Activated CD4-positive, alpha-beta T cell treated with anti-CD3 and anti-CD28 coated beads for 36 hours (primary cell): ENCODE measurements at regions of chr1 and their contacts with region 1.

Region 1: GRCh38 chr1:41003640-41004220 is 17.8 kb downstream of the SLFNL1 start:
- DNase-seq: peak; percentile 96
- ATAC-seq: peak; percentile 100
- H3K4me3 Mint-ChIP-seq: no peak overlapping the region
- H3K27ac Mint-ChIP-seq: no peak overlapping the region
- H3K4me1 Mint-ChIP-seq: peaks cover 26% of the 10 kb centered on the region
- H3K27me3 Mint-ChIP-seq: no peaks in the 10 kb centered on the region

Region 2: GRCh38 chr1:39754906-39755504 is 1248.7 kb before region 1 on chr1:
- CTCF ChIA-PET with region 1: no interaction called
- POLR2A ChIA-PET with region 1: no interaction called
- intact Hi-C with region 1: no loop called
- DNase-seq: no peak
- ATAC-seq: no peak
- H3K4me3 Mint-ChIP-seq: no peak overlapping the region
- H3K27ac Mint-ChIP-seq: no peak overlapping the region
- H3K4me1 Mint-ChIP-seq: no peaks in the 10 kb centered on the region
- H3K27me3 Mint-ChIP-seq: no peaks in the 10 kb centered on the region

Region 3: DNA sequence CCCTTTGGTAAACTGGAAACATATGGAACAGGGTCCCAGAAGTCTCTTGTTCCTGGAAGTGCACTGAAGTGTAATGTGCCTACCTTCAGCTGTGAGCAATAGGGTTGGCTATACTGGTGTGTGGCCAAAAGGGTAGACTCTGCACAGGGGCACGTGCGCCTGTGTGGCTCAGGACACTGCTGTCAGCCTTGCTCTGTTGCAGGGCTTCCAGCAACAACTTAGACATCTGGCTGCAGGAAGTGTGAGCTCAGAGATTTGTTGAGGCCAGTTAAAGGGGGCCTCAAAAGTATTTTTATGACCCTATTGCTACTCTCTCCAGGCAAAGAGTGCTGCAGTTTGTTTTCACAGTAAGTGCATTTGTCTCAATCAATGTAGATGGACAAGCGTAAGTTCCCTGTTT is 16.8 kb before region 1 on chr1:
- CTCF ChIA-PET with region 1: interaction called, 22 read pairs
- POLR2A ChIA-PET with region 1: interaction called, 12 read pairs
- intact Hi-C with region 1: loop called (anchors 1 kb)
- DNase-seq: no peak
- ATAC-seq: no peak
- H3K4me3 Mint-ChIP-seq: no peak overlapping the region
- H3K27ac Mint-ChIP-seq: peak overlapping the region; percentile 4
- H3K4me1 Mint-ChIP-seq: peaks cover 49% of the 10 kb centered on the region
- H3K27me3 Mint-ChIP-seq: no peaks in the 10 kb centered on the region

Region 4: DNA sequence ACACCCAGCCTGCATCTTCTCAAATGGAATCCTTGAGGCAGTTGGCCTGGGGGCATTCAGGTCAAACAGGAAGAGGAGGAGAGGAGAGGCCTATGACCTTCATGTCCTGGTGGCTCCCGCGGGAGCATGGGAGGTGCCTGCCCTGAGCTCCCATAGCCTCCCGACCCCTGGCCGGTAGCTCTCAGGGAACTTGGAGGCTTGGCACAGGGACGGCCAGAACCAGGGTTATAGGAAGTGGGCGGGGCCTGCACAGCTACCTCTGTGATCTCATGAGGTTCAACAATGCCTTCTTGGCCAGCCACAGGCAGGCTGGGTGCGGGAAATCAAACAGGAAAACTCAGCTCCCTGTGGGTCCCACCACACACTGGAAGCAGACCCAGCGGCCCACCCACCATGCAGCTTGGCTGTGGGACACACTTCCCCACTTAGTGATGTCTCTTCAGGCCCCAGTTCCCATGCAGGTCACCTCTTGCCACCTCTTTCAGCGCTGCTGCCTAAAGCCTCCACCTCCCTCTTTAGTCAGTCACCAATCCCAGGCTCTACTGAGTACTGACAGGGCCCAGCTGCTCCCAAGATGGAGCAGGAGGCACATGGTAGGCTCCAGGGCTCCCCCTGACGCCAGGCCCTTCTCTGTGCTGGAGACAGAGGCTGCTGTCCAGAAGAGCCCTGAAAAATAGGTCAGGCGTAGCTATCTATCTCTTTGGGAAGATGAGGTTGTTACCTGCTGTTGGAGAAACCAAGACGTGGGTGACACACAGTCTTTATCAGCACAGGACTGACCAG is 18.0 kb after region 1 on chr1 and contains the start of gene SLFNL1:
- CTCF ChIA-PET with region 1: no interaction called
- POLR2A ChIA-PET with region 1: no interaction called
- intact Hi-C with region 1: loop called in 1 of 2 experiments (anchors 2 kb)
- DNase-seq: no peak
- ATAC-seq: no peak
- H3K4me3 Mint-ChIP-seq: no peak within 1 kb of the TSS
- H3K27ac Mint-ChIP-seq: no peak within 1 kb of the TSS
- H3K4me1 Mint-ChIP-seq: no peaks in the 10 kb centered on the region
- H3K27me3 Mint-ChIP-seq: no peaks in the 10 kb centered on the region
- total RNA-seq, gene SLFNL1: 0.14 TPM

Region 5: GRCh38 chr1:41950820-41951219 is 947.1 kb after region 1 on chr1:
- CTCF ChIA-PET with region 1: no interaction called
- POLR2A ChIA-PET with region 1: no interaction called
- intact Hi-C with region 1: no loop called
- DNase-seq: peak; percentile 35
- ATAC-seq: peak; percentile 79
- H3K4me3 Mint-ChIP-seq: no peak overlapping the region
- H3K27ac Mint-ChIP-seq: peak overlapping the region; percentile 73
- H3K4me1 Mint-ChIP-seq: peaks cover 34% of the 10 kb centered on the region
- H3K27me3 Mint-ChIP-seq: no peaks in the 10 kb centered on the region